Heart left ventricle (tissue), 16 donors: ENCODE measurements at regions of chr14 and their contacts with region 1.

Region 1: GRCh38 chr14:24431569-24432258 is 2.0 kb downstream of the KHNYN start:
- DNase-seq: peak; percentile 91 to 95 (median 93)
- ATAC-seq: peak; percentile 60 to 76 (median 66)
- H3K4me3 ChIP-seq: peak overlapping the region in 10 of 12 donors; percentile 61 to 89 (median 82)
- H3K27ac ChIP-seq: peak overlapping the region in 11 of 12 donors; percentile 80 to 100 (median 96)
- H3K4me1 ChIP-seq: peaks cover 3 to 60% (median 39%) of the 10 kb centered on the region in 12 donors
- H3K27me3 ChIP-seq: no peaks in the 10 kb centered on the region
- CTCF ChIP-seq: peak; percentile 82 to 96 (median 90)
- POLR2A ChIP-seq: no peak

Region 2: GRCh38 chr14:24232121-24232644 is 199.5 kb before region 1 on chr14 and contains the start of gene NEDD8:
- intact Hi-C with region 1: loop called in 1 of 10 experiments (anchors 5 kb)
- DNase-seq: peak; percentile 92 to 95 (median 93)
- ATAC-seq: peak; percentile 89 to 93 (median 90)
- H3K4me3 ChIP-seq: peak within 1 kb of the TSS; percentile 55 to 99 (median 88)
- H3K27ac ChIP-seq: peak within 1 kb of the TSS; percentile 72 to 98 (median 93)
- H3K4me1 ChIP-seq: peaks cover 0 to 53% (median 31%) of the 10 kb centered on the region in 12 donors
- H3K27me3 ChIP-seq: no peaks in the 10 kb centered on the region
- CTCF ChIP-seq: no peak
- POLR2A ChIP-seq: peak in 1 of 2 donors; percentile 63
- total RNA-seq, gene NEDD8: 174 to 217 (median 197) TPM

Region 3: DNA sequence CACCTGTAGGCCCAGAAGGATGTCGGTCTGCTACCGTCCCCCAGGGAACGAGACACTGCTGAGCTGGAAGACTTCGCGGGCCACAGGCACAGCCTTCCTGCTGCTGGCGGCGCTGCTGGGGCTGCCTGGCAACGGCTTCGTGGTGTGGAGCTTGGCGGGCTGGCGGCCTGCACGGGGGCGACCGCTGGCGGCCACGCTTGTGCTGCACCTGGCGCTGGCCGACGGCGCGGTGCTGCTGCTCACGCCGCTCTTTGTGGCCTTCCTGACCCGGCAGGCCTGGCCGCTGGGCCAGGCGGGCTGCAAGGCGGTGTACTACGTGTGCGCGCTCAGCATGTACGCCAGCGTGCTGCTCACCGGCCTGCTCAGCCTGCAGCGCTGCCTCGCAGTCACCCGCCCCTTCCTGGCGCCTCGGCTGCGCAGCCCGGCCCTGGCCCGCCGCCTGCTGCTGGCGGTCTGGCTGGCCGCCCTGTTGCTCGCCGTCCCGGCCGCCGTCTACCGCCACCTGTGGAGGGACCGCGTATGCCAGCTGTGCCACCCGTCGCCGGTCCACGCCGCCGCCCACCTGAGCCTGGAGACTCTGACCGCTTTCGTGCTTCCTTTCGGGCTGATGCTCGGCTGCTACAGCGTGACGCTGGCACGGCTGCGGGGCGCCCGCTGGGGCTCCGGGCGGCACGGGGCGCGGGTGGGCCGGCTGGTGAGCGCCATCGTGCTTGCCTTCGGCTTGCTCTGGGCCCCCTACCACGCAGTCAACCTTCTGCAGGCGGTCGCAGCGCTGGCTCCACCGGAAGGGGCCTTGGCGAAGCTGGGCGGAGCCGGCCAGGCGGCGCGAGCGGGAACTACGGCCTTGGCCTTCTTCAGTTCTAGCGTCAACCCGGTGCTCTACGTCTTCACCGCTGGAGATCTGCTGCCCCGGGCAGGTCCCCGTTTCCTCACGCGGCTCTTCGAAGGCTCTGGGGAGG is 120.8 kb before region 1 on chr14 and contains the start of gene LTB4R:
- intact Hi-C with region 1: loop called in 1 of 10 experiments (anchors 5 kb)
- DNase-seq: peak; percentile 78 to 91 (median 85)
- ATAC-seq: peak; percentile 62 to 87 (median 82)
- H3K4me3 ChIP-seq: peak within 1 kb of the TSS; percentile 25 to 81 (median 63)
- H3K27ac ChIP-seq: peak within 1 kb of the TSS; percentile 74 to 92 (median 88)
- H3K4me1 ChIP-seq: peaks cover 11 to 83% (median 48%) of the 10 kb centered on the region in 12 donors
- H3K27me3 ChIP-seq: peaks cover 0 to 3% (median 0%) of the 10 kb centered on the region in 9 donors
- CTCF ChIP-seq: peak; percentile 10 to 63 (median 46)
- POLR2A ChIP-seq: peak in 1 of 2 donors; percentile 44
- total RNA-seq, gene LTB4R: 0.92 to 8.8 (median 1.7) TPM

Region 4: GRCh38 chr14:24361326-24361725 is 70.4 kb before region 1 on chr14:
- intact Hi-C with region 1: loop called (anchors 1 to 5 kb)
- DNase-seq: no peak
- ATAC-seq: no peak
- H3K4me3 ChIP-seq: no peak overlapping the region
- H3K27ac ChIP-seq: no peak overlapping the region
- H3K4me1 ChIP-seq: peaks cover 0 to 17% (median 11%) of the 10 kb centered on the region in 12 donors
- H3K27me3 ChIP-seq: peaks cover 0 to 15% (median under 1%) of the 10 kb centered on the region in 9 donors
- CTCF ChIP-seq: no peak
- POLR2A ChIP-seq: no peak

Region 5: GRCh38 chr14:24398653-24399446 is 32.9 kb before region 1 on chr14 and contains the start of gene NYNRIN:
- intact Hi-C with region 1: loop called in 1 of 10 experiments (anchors 2 kb)
- DNase-seq: peak; percentile 79 to 86 (median 84)
- ATAC-seq: peak; percentile 83 to 90 (median 84)
- H3K4me3 ChIP-seq: peak within 1 kb of the TSS; percentile 63 to 88 (median 78)
- H3K27ac ChIP-seq: peak within 1 kb of the TSS; percentile 58 to 91 (median 85)
- H3K4me1 ChIP-seq: peaks cover 0 to 63% (median 47%) of the 10 kb centered on the region in 12 donors
- H3K27me3 ChIP-seq: no peaks in the 10 kb centered on the region
- CTCF ChIP-seq: no peak
- POLR2A ChIP-seq: peak in 1 of 2 donors; percentile 47
- total RNA-seq, gene NYNRIN: 3.7 to 10.0 (median 7.5) TPM

Region 6: GRCh38 chr14:24463017-24463883 is 31.5 kb after region 1 on chr14:
- intact Hi-C with region 1: no loop called
- DNase-seq: no peak
- ATAC-seq: no peak
- H3K4me3 ChIP-seq: no peak overlapping the region
- H3K27ac ChIP-seq: no peak overlapping the region
- H3K4me1 ChIP-seq: peaks cover 0 to 7% (median 0%) of the 10 kb centered on the region in 12 donors
- H3K27me3 ChIP-seq: no peaks in the 10 kb centered on the region
- CTCF ChIP-seq: no peak
- POLR2A ChIP-seq: no peak

Region 7: DNA sequence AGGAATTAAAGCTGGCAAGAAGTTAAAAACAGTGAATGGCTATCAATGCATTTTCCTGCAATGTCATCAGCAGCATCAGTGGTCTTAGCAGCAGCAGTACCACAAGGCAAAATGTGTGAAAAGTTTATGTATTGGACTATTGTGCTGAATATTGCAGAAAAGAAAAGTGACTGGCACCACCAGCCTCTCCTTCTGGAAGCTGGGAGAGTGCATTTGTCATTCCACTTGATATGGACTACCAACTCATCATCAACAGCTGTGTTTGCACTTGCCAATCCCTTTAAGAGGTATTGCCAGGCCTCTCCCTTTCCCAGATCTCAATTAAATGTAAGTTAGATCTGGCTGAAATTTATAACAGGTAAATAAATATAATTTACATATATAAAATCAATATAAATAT is 353.3 kb after region 1 on chr14:
- intact Hi-C with region 1: no loop called
- DNase-seq: no peak
- ATAC-seq: no peak
- H3K4me3 ChIP-seq: no peak overlapping the region
- H3K27ac ChIP-seq: no peak overlapping the region
- H3K4me1 ChIP-seq: peaks cover 0 to 16% (median 12%) of the 10 kb centered on the region in 12 donors
- H3K27me3 ChIP-seq: no peaks in the 10 kb centered on the region
- CTCF ChIP-seq: no peak
- POLR2A ChIP-seq: no peak